Astrocyte of the cerebellum (primary cell): ENCODE measurements at regions of chr7 and their contacts with region 1.

Region 1: GRCh38 chr7:27115221-27116026 is 12.9 kb upstream of the HOXA2 start:
- DNase-seq: no peak
- H3K4me3 ChIP-seq: peak overlapping the region; percentile 76
- CTCF ChIP-seq: no peak

Region 2: GRCh38 chr7:26853788-26854393 is 261.5 kb before region 1 on chr7:
- in situ Hi-C with region 1: loop called (anchors 5 kb)
- DNase-seq: peak; percentile 47
- H3K4me3 ChIP-seq: no peak overlapping the region
- CTCF ChIP-seq: peak; percentile 40